ENCODE measurements at regions of chr13 and their contacts with region 1.

Region 1: GRCh38 chr13:75870397-75870903 is 234.3 kb downstream of the LMO7 start:
- DNase-seq: no peak
- ATAC-seq: no peak; the same call in 2 of the 3 replicates
- H3K4me3 ChIP-seq: no peak overlapping the region
- H3K27ac ChIP-seq: no peak overlapping the region
- H3K4me1 ChIP-seq: 0 out of 2 replicates have a peak, but pooled peaks cover 3% of the 10 kb centered on the region
- H3K27me3 ChIP-seq: no peaks in the 10 kb centered on the region; a peak in 1 of 4 replicates
- CTCF ChIP-seq: peak; percentile 65 to 76 (median 68)
- EP300 ChIP-seq: no peak
- POLR2A ChIP-seq: no peak
- RAD21 ChIP-seq: peak; percentile 66

Region 2: DNA sequence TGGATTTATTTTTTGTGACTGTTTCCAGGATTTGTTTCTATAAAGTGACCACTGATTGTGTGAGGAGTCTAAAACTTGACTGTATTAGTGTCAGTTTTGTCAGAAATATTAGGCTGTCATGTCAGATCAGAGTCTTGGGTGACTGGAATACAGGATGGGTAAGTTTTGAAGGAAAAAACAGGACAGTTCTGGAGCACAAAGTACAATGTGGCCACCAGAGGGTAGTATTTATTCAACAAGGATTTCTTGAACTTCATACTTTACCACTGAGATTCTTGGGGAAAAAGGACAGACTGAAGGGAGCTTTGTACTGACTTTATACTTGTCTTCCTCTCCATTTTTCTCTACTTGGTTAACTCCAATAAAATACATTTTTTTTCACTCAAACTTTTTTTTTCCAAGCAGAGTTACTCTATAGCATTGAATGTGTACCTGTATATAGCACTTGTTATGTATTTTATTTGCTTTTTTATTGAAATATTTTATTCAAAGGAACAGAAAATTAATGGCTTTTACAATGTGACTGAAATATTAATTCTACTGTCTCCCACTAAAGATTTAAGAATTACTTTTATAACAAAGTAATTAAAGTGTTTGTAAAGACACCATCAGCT is 183.2 kb before region 1 on chr13:
- CTCF ChIA-PET with region 1: interaction called, 54 read pairs
- POLR2A ChIA-PET with region 1: no interaction called
- RAD21 ChIA-PET with region 1: interaction called, 16 read pairs
- SMC1A ChIA-PET with region 1: interaction called, 228 read pairs
- in situ Hi-C with region 1: no loop called
- intact Hi-C with region 1: no loop called
- DNase-seq: no peak
- ATAC-seq: peak; percentile 60
- H3K4me3 ChIP-seq: no peak overlapping the region
- H3K27ac ChIP-seq: no peak overlapping the region
- H3K4me1 ChIP-seq: no peaks in the 10 kb centered on the region
- H3K27me3 ChIP-seq: no peaks in the 10 kb centered on the region
- CTCF ChIP-seq: peak; percentile 23 to 39 (median 38); a peak in 5 of 6 replicates
- EP300 ChIP-seq: no peak
- POLR2A ChIP-seq: no peak
- RAD21 ChIP-seq: peak; percentile 47

Region 3: GRCh38 chr13:75749407-75749806 is 121.0 kb before region 1 on chr13:
- CTCF ChIA-PET with region 1: no interaction called
- POLR2A ChIA-PET with region 1: no interaction called
- RAD21 ChIA-PET with region 1: no interaction called
- SMC1A ChIA-PET with region 1: no interaction called
- in situ Hi-C with region 1: no loop called
- intact Hi-C with region 1: no loop called
- DNase-seq: no peak
- ATAC-seq: no peak
- H3K4me3 ChIP-seq: no peak overlapping the region
- H3K27ac ChIP-seq: no peak overlapping the region
- H3K4me1 ChIP-seq: no peaks in the 10 kb centered on the region
- H3K27me3 ChIP-seq: no peaks in the 10 kb centered on the region
- CTCF ChIP-seq: no peak
- EP300 ChIP-seq: no peak
- POLR2A ChIP-seq: no peak
- RAD21 ChIP-seq: no peak

Region 4: DNA sequence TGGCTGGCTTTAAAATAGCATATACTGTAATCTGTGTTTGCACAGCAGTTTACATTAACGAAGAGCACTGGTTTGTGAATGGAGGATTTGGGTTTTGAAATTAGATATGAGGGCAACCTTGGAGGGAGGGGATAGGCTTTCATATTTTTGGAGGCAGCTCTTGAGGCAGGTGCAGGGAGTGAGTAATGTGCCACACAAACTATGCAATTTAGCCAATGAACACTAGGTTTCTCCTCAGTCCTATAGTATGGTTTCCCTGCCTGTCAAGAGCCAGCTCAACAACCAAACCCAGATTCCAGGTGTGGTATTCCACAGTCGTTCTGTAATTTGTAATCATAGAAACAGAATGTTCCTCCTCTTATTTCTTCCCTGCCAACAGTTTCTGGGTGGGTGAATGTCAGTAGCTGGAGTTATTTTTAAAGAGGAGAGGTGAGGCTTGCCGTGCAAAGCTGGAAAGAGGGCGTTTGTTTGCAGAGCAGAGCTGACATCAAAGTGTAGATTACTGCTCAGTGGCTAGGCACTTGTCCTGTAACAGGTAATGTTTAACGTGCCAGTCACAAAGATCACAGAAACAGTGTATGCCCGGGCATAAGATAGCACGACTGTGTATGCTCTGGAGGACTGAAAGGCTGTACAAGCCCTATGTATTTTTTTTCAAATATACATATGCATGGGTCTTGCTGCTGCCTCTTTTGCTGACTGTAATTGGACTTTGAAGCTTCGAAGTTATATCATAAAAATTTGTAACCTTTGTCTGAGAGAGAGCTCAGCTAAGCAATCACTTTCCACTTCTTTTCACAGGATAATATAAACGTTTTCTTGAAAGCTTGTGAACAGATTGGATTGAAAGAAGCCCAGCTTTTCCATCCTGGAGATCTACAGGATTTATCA is 110.1 kb before region 1 on chr13:
- CTCF ChIA-PET with region 1: interaction called, 25 read pairs
- POLR2A ChIA-PET with region 1: no interaction called
- RAD21 ChIA-PET with region 1: interaction called, 8 read pairs
- SMC1A ChIA-PET with region 1: interaction called, 10 read pairs
- in situ Hi-C with region 1: no loop called
- intact Hi-C with region 1: no loop called
- DNase-seq: no peak
- ATAC-seq: no peak
- H3K4me3 ChIP-seq: no peak overlapping the region
- H3K27ac ChIP-seq: peak overlapping the region; percentile 93
- H3K4me1 ChIP-seq: peaks cover 15% of the 10 kb centered on the region
- H3K27me3 ChIP-seq: no peaks in the 10 kb centered on the region
- CTCF ChIP-seq: no peak
- EP300 ChIP-seq: no peak
- POLR2A ChIP-seq: no peak
- RAD21 ChIP-seq: peak; percentile 20; the same call in 1 of the 2 replicates

Region 5: DNA sequence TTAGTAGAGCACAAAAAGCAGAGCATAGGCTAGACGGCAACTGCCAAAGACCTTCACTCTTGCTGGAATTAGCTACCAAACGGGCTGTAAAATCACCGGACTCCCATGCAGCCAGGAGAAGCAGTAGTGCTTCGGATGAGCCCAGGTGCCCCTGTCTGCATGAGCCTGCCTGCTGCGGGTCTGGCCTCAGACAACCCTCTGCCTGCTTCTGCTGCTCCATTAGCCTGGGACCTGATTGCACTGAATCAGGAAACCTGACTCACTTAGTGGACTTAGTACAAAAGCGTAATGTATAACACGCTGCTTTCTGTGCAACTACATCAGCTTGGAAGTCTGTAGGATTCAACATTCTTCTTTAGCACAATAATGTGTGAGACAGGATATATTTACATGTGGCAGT is 64.3 kb before region 1 on chr13:
- CTCF ChIA-PET with region 1: no interaction called
- POLR2A ChIA-PET with region 1: no interaction called
- RAD21 ChIA-PET with region 1: no interaction called
- SMC1A ChIA-PET with region 1: no interaction called
- in situ Hi-C with region 1: no loop called
- intact Hi-C with region 1: no loop called
- DNase-seq: no peak
- ATAC-seq: no peak
- H3K4me3 ChIP-seq: no peak overlapping the region
- H3K27ac ChIP-seq: no peak overlapping the region
- H3K4me1 ChIP-seq: no peaks in the 10 kb centered on the region
- H3K27me3 ChIP-seq: no peaks in the 10 kb centered on the region
- CTCF ChIP-seq: no peak
- EP300 ChIP-seq: no peak
- POLR2A ChIP-seq: no peak
- RAD21 ChIP-seq: no peak

Region 6: GRCh38 chr13:75850916-75851315 is 19.5 kb before region 1 on chr13:
- CTCF ChIA-PET with region 1: interaction called, 10 read pairs
- POLR2A ChIA-PET with region 1: no interaction called
- RAD21 ChIA-PET with region 1: interaction called, 5 read pairs
- SMC1A ChIA-PET with region 1: interaction called, 6 read pairs
- in situ Hi-C with region 1: no loop called
- intact Hi-C with region 1: no loop called
- DNase-seq: no peak
- ATAC-seq: no peak
- H3K4me3 ChIP-seq: no peak overlapping the region
- H3K27ac ChIP-seq: no peak overlapping the region
- H3K4me1 ChIP-seq: no peaks in the 10 kb centered on the region; the same call in 1 of the 2 replicates
- H3K27me3 ChIP-seq: no peaks in the 10 kb centered on the region
- CTCF ChIP-seq: no peak
- EP300 ChIP-seq: no peak
- POLR2A ChIP-seq: no peak
- RAD21 ChIP-seq: no peak

Region 7: GRCh38 chr13:76004416-76004815 is 134.0 kb after region 1 on chr13:
- CTCF ChIA-PET with region 1: interaction called, 16 read pairs
- POLR2A ChIA-PET with region 1: no interaction called
- RAD21 ChIA-PET with region 1: no interaction called
- SMC1A ChIA-PET with region 1: no interaction called
- in situ Hi-C with region 1: no loop called
- intact Hi-C with region 1: no loop called
- DNase-seq: no peak
- ATAC-seq: no peak
- H3K4me3 ChIP-seq: no peak overlapping the region
- H3K27ac ChIP-seq: no peak overlapping the region
- H3K4me1 ChIP-seq: no peaks in the 10 kb centered on the region
- H3K27me3 ChIP-seq: no peaks in the 10 kb centered on the region
- CTCF ChIP-seq: no peak
- EP300 ChIP-seq: no peak
- POLR2A ChIP-seq: no peak
- RAD21 ChIP-seq: no peak

Region 8: DNA sequence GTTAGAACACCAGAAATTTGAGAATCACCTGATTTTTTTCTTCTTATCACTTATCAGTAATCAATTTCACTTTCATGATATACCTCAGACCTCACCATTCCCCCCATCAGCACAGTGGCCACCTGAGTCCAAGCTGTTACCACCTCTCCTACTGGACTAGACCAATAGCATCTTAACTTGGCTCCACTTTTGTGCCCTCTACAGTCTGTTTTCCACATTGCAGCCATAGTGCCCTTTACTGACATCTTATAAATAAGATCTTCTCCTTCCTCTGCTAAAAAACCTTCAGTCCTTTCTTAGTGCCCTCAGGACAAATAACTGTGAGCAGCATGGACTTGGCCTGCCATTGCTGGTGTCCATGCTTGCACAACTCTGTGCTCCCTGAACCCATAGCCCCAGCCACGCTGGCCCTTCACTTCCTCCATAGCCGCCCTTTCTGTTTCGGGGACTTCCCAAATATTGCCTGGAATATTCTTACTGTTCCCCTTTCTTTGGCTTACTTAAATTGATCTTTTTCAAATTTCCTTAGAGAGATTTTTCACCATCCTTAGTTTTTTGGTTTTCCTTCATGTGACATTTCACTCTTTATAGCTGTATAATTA is 146.4 kb after region 1 on chr13:
- CTCF ChIA-PET with region 1: interaction called, 83 read pairs
- POLR2A ChIA-PET with region 1: no interaction called
- RAD21 ChIA-PET with region 1: interaction called, 35 read pairs
- SMC1A ChIA-PET with region 1: interaction called, 13 read pairs
- in situ Hi-C with region 1: loop called (anchors 5 kb)
- intact Hi-C with region 1: no loop called
- DNase-seq: no peak
- ATAC-seq: peak; percentile 90
- H3K4me3 ChIP-seq: no peak overlapping the region
- H3K27ac ChIP-seq: no peak overlapping the region
- H3K4me1 ChIP-seq: no peaks in the 10 kb centered on the region
- H3K27me3 ChIP-seq: no peaks in the 10 kb centered on the region
- CTCF ChIP-seq: peak; percentile 57 to 72 (median 60); a peak in 5 of 6 replicates
- EP300 ChIP-seq: no peak
- POLR2A ChIP-seq: no peak
- RAD21 ChIP-seq: peak; percentile 69

Region 9: GRCh38 chr13:76473552-76474134 is 603.2 kb after region 1 on chr13:
- CTCF ChIA-PET with region 1: interaction called, 89 read pairs
- POLR2A ChIA-PET with region 1: no interaction called
- RAD21 ChIA-PET with region 1: interaction called, 6 read pairs
- SMC1A ChIA-PET with region 1: interaction called, 48 read pairs
- in situ Hi-C with region 1: loop called (anchors 5 kb)
- intact Hi-C with region 1: loop called (anchors 1 kb)
- DNase-seq: peak; percentile 25
- ATAC-seq: peak; percentile 100
- H3K4me3 ChIP-seq: no peak overlapping the region
- H3K27ac ChIP-seq: no peak overlapping the region
- H3K4me1 ChIP-seq: no peaks in the 10 kb centered on the region
- H3K27me3 ChIP-seq: no peaks in the 10 kb centered on the region
- CTCF ChIP-seq: peak; percentile 68 to 85 (median 84)
- EP300 ChIP-seq: no peak
- POLR2A ChIP-seq: no peak
- RAD21 ChIP-seq: peak; percentile 96

Measured in GM12878 (cell line).